ENCODE measurements at regions of chr4 and their contacts with region 1.

Region 1: GRCh38 chr4:165234766-165235165 is 27.4 kb downstream of the KLHL2 start:
- DNase-seq: no peak
- H3K4me3 Mint-ChIP-seq: no peak overlapping the region
- H3K27ac Mint-ChIP-seq: no peak overlapping the region
- H3K4me1 Mint-ChIP-seq: peaks cover 29% of the 10 kb centered on the region
- H3K27me3 Mint-ChIP-seq: no peaks in the 10 kb centered on the region

Region 2: GRCh38 chr4:165190591-165191347 is 44.0 kb before region 1 on chr4:
- CTCF ChIA-PET with region 1: no interaction called
- intact Hi-C with region 1: loop called (anchors 1 kb)
- DNase-seq: peak; percentile 73
- H3K4me3 Mint-ChIP-seq: no peak overlapping the region
- H3K27ac Mint-ChIP-seq: peak overlapping the region; percentile 79
- H3K4me1 Mint-ChIP-seq: peaks cover 33% of the 10 kb centered on the region
- H3K27me3 Mint-ChIP-seq: peaks cover 4% of the 10 kb centered on the region

Measured in activated naive CD4-positive, alpha-beta T cell treated with anti-CD3 and anti-CD28 coated beads for 36 hours (primary cell).